Left colon (tissue), 2 donors: ENCODE measurements at regions of chr19 and their contacts with region 1.

Region 1: DNA sequence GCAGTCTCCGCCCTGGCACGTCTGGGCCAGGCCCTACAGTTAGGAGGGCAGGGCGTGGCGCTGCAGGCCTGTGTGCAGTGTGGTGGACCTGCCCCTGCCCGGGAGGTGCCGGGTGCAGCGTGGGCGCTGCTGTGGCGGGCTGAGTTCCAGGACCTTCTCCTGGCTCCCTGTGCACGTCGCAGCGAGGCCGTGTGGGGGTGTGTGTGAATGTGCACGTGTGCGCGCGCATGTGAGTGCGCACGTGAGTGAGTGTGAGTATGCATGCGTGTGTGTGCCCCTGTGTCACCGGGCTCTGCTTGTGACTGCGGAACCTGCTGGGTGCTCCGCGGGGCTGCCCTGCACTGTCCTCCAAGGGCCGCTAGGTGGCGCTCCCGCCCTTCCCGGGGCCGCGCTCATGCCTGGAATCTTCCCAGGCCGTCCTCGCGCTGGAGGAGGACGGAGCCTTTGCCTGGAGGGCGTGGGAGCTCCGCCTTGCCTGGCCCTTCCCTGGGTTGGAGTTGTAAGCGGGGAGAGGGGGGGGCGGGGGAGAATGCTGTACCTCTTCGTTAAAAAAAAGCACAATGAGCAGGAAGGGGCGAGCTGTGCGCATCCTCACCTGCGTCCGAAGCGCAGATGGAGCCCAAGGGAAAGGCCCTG is 79.3 kb downstream of the KDM4B start:
- DNase-seq: peak; percentile 80 to 86
- ATAC-seq: peak; percentile 75

Region 2: GRCh38 chr19:5577785-5578493 is 529.7 kb after region 1 on chr19:
- intact Hi-C with region 1: loop called in 1 of 2 experiments (anchors 5 kb)
- DNase-seq: peak; percentile 76 to 83
- ATAC-seq: peak; percentile 84